AG04449 (cell line): ENCODE measurements at regions of chr1 and their contacts with region 1.

Region 1: DNA sequence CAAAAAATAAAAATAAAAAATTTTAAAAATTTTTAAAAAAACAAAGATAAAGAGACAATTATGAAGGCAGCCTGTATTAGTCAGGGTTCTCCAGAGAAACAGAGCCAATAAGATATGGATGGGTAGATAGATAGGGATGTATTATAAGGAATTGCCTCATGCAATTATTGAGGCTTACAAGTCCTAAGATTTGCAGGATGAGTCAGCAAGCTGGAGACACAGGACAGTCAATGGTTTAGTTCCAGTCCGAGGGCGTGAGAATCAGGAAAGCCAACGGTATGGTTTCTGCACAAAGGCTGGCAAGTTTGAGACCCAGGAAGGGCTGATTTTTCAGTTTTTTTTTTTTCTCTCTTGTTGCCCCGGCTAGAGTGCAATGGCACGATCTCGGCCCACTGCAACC is 24.1 kb upstream of the EIF4G3 start:
- DNase-seq: no peak
- H3K4me3 ChIP-seq: no peak overlapping the region
- CTCF ChIP-seq: no peak

Region 2: GRCh38 chr1:20767271-20767670 is 433.5 kb before region 1 on chr1:
- CTCF ChIA-PET with region 1: interaction called, 11 read pairs
- POLR2A ChIA-PET with region 1: no interaction called
- DNase-seq: no peak
- H3K4me3 ChIP-seq: no peak overlapping the region
- CTCF ChIP-seq: no peak

Region 3: DNA sequence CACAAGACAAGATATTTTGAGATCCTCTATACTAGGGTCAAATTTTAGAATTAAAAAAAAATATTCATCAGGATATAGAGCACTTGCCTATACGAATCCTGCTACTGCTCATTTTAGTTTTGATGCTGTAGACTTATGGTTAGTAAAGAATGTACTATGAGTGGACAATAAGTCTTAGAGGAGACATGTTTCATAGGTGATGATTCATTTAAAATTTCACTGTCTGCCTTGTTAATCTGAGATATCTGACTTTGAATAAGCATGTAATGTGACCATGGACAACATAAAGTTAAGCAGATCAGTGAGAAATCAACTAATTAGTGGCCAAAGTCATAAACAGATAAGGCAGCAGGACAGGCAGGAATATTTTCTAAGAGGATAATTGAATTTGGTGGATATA is 306.8 kb before region 1 on chr1:
- CTCF ChIA-PET with region 1: interaction called, 10 read pairs
- POLR2A ChIA-PET with region 1: no interaction called
- DNase-seq: no peak
- H3K4me3 ChIP-seq: no peak overlapping the region
- CTCF ChIP-seq: no peak

Region 4: GRCh38 chr1:20981915-20982314 is 218.9 kb before region 1 on chr1:
- CTCF ChIA-PET with region 1: interaction called, 34 read pairs
- POLR2A ChIA-PET with region 1: no interaction called
- DNase-seq: no peak
- H3K4me3 ChIP-seq: no peak overlapping the region
- CTCF ChIP-seq: no peak

Region 5: GRCh38 chr1:21154717-21155116 is 46.0 kb before region 1 on chr1:
- CTCF ChIA-PET with region 1: no interaction called
- POLR2A ChIA-PET with region 1: no interaction called
- DNase-seq: no peak
- H3K4me3 ChIP-seq: no peak overlapping the region
- CTCF ChIP-seq: no peak

Region 6: DNA sequence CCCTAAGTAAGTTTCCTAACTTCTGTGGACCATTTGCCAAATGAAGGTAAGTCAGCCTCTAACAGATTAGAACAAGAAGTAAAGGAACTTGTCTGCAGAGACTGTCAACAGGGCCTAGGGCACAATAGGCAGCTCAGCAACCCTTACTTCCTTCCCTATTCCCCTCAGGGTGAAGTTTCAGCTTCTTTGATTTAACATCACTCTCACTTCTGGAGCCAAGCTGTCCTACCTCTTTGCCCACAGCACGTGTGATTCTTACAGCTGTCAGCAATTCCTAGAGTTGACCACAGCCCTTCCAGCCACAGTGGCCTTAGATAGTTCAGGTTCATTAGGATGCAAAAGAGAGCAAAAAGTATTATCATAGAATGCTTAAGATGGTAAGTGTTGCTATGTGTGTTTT is 16.5 kb before region 1 on chr1:
- CTCF ChIA-PET with region 1: interaction called, 22 read pairs
- POLR2A ChIA-PET with region 1: no interaction called
- DNase-seq: no peak
- H3K4me3 ChIP-seq: no peak overlapping the region
- CTCF ChIP-seq: no peak

Region 7: DNA sequence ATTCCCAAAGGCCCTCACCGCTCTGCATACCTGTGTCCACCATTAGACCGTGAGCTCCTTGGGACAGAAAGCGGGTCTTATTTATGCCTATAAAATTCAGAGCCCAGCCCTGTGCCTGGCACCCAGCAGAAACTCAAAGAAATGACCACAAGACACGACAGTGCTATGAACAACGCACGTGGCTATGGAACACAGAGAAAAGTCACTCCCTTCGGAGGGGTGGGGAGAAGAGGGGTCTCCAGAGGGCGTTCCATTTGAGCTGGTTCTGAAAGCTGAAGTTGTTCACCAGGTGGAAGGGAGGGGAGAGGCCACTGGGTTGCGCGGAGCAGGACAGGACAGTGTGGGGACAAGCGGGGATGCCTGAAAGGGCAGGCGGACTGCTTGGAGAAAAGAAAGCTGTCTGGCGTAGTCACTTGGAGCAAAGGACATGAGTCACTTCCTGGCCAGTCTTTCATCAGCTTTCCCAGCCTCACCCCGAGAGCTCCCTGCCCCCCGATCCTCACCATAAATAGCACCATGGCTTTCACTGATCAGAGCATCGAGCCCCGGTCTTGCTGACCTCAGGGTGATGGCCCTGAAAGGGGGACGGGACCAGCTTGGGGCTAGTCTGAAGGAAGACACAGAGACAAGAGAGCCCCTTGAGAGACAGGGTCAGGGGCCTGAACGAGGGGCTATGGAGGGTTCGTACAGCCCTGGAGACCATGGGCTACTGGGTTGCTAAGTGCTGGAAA is 60.9 kb after region 1 on chr1:
- CTCF ChIA-PET with region 1: no interaction called
- POLR2A ChIA-PET with region 1: no interaction called
- DNase-seq: peak; percentile 89
- H3K4me3 ChIP-seq: peak overlapping the region; percentile 15; the same call in 1 of the 2 replicates
- CTCF ChIP-seq: no peak

Region 8: GRCh38 chr1:21302747-21303715 is 102.3 kb after region 1 on chr1:
- CTCF ChIA-PET with region 1: no interaction called
- POLR2A ChIA-PET with region 1: no interaction called
- DNase-seq: peak; percentile 36
- H3K4me3 ChIP-seq: no peak overlapping the region
- CTCF ChIP-seq: no peak